Calu3 (cell line): ENCODE measurements at regions of chr1 and their contacts with region 1.

Region 1: DNA sequence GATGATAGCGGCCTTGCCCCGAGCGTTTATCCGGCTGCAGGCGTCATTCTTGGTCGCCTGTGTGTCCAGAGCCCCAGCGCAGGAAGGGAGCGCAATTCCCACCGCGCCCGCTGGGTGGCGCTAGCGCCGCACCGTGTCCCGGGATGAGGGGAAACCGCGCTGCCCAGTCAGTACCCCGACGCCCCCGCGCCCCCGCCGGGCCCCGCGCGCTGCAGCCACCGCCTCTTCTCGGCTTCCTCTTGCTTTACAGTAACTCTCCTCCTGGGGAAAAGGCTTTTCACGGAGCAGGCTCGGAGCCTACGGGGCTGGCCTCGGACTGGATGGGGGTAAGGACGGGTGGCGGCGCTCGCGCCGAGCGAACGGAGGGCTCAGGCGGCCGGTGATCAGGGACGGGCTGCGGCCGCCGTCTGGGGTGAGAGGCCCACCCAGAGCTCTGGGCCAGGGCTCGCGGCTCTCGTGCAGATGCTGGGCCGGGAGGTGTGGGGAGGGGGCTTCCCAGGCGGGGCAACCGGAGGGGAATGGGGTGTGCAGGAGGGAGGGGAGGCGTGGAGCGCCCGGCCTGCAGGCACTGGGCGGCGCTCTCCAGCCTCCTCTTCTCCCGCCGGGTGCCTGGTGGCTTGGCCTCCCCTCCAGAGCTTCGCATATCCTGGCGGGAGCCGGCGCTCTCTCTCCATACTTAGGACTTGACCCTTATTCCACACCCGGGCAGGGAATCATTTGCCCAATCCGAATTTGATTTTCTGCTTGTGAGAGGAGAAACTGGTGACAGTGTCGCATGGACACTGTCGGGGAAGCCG is 29.8 kb downstream of the TEX35 start:
- DNase-seq: peak; percentile 98
- H3K4me3 Mint-ChIP-seq: peak overlapping the region; percentile 95
- H3K27ac Mint-ChIP-seq: peak overlapping the region; percentile 56
- H3K4me1 Mint-ChIP-seq: peaks cover 38% of the 10 kb centered on the region
- H3K27me3 Mint-ChIP-seq: no peaks in the 10 kb centered on the region
- CTCF ChIP-seq: peak; percentile 97

Region 2: DNA sequence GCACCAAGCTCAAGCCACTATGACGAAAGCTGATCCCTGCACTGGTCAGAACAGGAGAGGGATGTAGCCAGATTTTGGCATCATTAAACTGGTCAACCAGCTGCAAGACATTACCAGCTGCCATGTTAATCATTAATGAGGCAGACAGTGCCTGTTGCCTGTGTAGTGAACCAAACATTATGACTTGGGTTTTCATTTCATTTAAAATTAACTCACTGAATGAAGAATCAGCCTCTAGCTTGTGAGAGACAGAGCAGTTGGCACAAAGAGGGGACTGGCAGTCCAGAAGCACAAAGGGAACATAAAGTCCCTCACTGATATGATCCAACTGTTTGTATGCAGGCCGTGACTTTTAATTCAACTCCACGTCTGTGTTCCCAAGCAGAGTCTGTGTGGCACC is 891.8 kb before region 1 on chr1:
- CTCF ChIA-PET with region 1: no interaction called
- intact Hi-C with region 1: no loop called
- DNase-seq: no peak
- H3K4me3 Mint-ChIP-seq: no peak overlapping the region
- H3K27ac Mint-ChIP-seq: no peak overlapping the region
- H3K4me1 Mint-ChIP-seq: no peaks in the 10 kb centered on the region
- H3K27me3 Mint-ChIP-seq: peaks cover 57% of the 10 kb centered on the region
- CTCF ChIP-seq: no peak

Region 3: GRCh38 chr1:178552856-178553255 is 10.1 kb after region 1 on chr1:
- CTCF ChIA-PET with region 1: no interaction called
- intact Hi-C with region 1: no loop called
- DNase-seq: no peak
- H3K4me3 Mint-ChIP-seq: no peak overlapping the region
- H3K27ac Mint-ChIP-seq: no peak overlapping the region
- H3K4me1 Mint-ChIP-seq: no peaks in the 10 kb centered on the region
- H3K27me3 Mint-ChIP-seq: no peaks in the 10 kb centered on the region
- CTCF ChIP-seq: no peak

Region 4: DNA sequence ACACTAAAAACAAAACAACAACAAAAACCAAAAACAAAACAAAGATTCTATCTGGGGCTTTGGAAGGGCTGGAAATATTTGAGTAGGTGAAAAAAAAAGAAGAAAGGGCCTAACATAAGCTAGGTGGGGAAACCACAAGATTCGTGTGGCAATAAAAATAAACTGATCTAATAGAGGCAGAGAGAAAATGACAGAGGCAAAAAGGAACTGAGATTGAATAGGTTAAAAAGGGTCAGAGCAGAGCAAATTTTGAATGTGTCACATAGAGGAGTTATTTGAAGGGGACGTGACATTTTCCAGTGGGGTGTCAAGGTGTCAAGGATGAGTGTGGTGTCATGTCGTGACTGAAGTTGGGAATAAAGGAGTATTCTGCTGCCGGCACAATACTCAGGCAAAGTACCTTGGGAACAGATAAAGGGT is 117.0 kb after region 1 on chr1:
- CTCF ChIA-PET with region 1: no interaction called
- intact Hi-C with region 1: loop called (anchors 5 kb)
- DNase-seq: no peak
- H3K4me3 Mint-ChIP-seq: no peak overlapping the region
- H3K27ac Mint-ChIP-seq: no peak overlapping the region
- H3K4me1 Mint-ChIP-seq: peaks cover 24% of the 10 kb centered on the region
- H3K27me3 Mint-ChIP-seq: no peaks in the 10 kb centered on the region
- CTCF ChIP-seq: no peak

Region 5: DNA sequence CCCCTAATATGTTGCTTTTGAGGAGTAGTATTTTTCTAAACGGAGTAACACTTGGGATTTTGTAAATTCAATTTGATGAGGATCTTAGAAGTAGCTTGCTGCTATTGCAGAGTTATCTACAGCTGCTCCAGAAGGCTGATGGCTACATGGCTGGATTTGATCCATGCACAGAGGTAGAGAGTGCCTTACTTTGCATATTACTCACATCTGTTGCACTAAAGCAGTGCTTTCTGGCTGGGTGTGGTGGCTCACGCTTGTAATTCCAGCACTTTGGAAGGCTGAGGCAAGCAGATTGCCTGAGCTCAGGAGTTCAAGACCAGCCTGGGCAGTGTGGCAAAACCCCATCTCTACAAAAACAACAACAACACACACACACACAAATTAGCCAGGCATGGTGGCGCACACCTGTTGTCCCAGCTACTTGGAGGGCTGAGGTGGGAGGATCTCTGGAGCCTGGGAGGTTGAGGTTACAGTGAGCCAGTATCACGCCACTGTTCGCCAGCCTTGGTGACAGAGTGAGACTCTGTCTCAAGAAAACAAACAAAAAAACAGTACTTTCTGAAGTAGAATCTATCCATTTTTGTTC is 206.9 kb after region 1 on chr1:
- CTCF ChIA-PET with region 1: interaction called, 13 read pairs
- intact Hi-C with region 1: loop called (anchors 10 kb)
- DNase-seq: no peak
- H3K4me3 Mint-ChIP-seq: no peak overlapping the region
- H3K27ac Mint-ChIP-seq: no peak overlapping the region
- H3K4me1 Mint-ChIP-seq: peaks cover 7% of the 10 kb centered on the region
- H3K27me3 Mint-ChIP-seq: no peaks in the 10 kb centered on the region
- CTCF ChIP-seq: no peak

Region 6: GRCh38 chr1:178870944-178871343 is 328.2 kb after region 1 on chr1 and contains the start of gene ANGPTL1:
- CTCF ChIA-PET with region 1: no interaction called
- intact Hi-C with region 1: loop called (anchors 5 kb)
- DNase-seq: no peak
- H3K4me3 Mint-ChIP-seq: peak within 1 kb of the TSS; percentile 6
- H3K27ac Mint-ChIP-seq: peak within 1 kb of the TSS; percentile 33
- H3K4me1 Mint-ChIP-seq: peaks cover 36% of the 10 kb centered on the region
- H3K27me3 Mint-ChIP-seq: no peaks in the 10 kb centered on the region
- CTCF ChIP-seq: no peak
- total RNA-seq, gene ANGPTL1: 0.35 and 0.59 TPM in 2 replicates